T-cell (primary cell): ENCODE measurements at regions of chr11 and their contacts with region 1.

Region 1: GRCh38 chr11:126440792-126441514 is 85.5 kb downstream of the ST3GAL4 start:
- DNase-seq: peak; percentile 31 to 79 (median 62)
- ATAC-seq: peak; percentile 58 to 75 (median 64)
- H3K4me3 ChIP-seq: peak overlapping the region in 1 of 2 donors; percentile 2
- H3K4me3 Mint-ChIP-seq: no peak overlapping the region
- H3K27ac ChIP-seq: no peak overlapping the region
- H3K27ac Mint-ChIP-seq: no peak overlapping the region
- H3K4me1 ChIP-seq: peaks cover 0 to 5% of the 10 kb centered on the region in 2 experiments
- H3K4me1 Mint-ChIP-seq: peaks cover 3 to 6% (median 5%) of the 10 kb centered on the region in 3 donors
- H3K27me3 ChIP-seq: peaks cover 0 to 29% of the 10 kb centered on the region in 2 experiments
- H3K27me3 Mint-ChIP-seq: peaks cover 7 to 23% of the 10 kb centered on the region in 2 donors

Region 2: GRCh38 chr11:126418887-126419286 is 22.1 kb before region 1 on chr11:
- CTCF ChIA-PET with region 1: no interaction called
- POLR2A ChIA-PET with region 1: interaction called in 1 of 2 experiments, 11 read pairs
- DNase-seq: no peak
- ATAC-seq: no peak
- H3K4me3 ChIP-seq: no peak overlapping the region
- H3K4me3 Mint-ChIP-seq: no peak overlapping the region
- H3K27ac ChIP-seq: no peak overlapping the region
- H3K27ac Mint-ChIP-seq: no peak overlapping the region
- H3K4me1 ChIP-seq: peaks cover 0 to 12% of the 10 kb centered on the region in 2 experiments
- H3K4me1 Mint-ChIP-seq: peaks cover 9 to 14% (median 11%) of the 10 kb centered on the region in 3 donors
- H3K27me3 ChIP-seq: peaks cover 0 to 8% of the 10 kb centered on the region in 2 experiments
- H3K27me3 Mint-ChIP-seq: peaks cover 3 to 5% of the 10 kb centered on the region in 2 donors